Motor neuron (in vitro differentiated cells): ENCODE measurements at regions of chr17 and their contacts with region 1.

Region 1: DNA sequence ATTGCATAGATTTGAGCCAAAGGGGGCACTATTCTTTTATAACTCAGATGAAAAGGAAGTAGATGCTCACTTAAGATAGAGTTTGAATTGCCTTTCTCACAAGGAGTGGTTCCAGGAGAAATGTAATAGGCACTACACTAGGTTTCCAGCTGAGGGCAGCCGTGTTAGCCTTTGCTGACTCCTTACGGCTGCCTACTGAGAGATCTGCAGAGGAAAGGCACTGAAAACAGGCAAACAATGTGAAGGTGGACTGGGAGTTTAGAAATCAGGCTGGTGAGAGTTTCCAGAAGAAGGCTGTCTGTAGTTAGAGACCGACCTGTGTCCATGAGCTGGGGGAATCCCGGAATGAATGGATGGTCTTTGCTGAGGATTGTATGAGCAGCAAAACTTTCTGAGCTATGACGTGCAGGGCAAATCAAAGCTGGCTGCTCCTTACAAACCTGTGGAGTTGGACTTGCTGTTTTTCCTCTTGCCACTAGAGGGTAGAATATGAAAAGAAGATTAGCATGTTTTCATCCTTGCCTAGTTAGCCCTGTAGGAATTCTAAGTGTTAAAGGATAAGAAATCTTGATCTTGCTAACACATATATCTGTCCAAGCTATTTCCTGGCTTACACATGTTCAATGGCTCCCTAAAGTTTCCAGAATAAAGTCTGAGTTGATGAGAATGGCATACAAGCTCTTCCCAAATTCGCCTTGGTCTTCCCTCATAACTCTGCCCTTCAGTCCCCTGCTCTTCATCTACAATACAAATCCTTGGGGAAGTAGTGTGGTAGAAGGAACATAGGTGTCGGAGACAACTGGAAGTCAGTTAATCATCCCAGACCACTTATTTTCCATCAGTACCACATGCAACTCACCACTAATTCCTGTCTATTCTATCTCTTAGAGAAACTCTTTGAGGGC is 20.1 kb upstream of the TAOK1 start:
- ATAC-seq: peak; percentile 81 to 97 (median 89)
- H3K4me3 ChIP-seq: peak overlapping the region in 1 of 5 donors; percentile 2
- H3K27ac ChIP-seq: no peak overlapping the region
- H3K4me1 ChIP-seq: peaks cover 12 to 20% of the 10 kb centered on the region in 2 donors

Region 2: GRCh38 chr17:29549177-29549923 is 179.3 kb after region 1 on chr17:
- in situ Hi-C with region 1: loop called in 5 of 9 experiments (anchors 25 kb)
- ATAC-seq: peak in 4 of 8 experiments; percentile 48 to 83 (median 62)
- H3K4me3 ChIP-seq: no peak overlapping the region
- H3K27ac ChIP-seq: no peak overlapping the region
- H3K4me1 ChIP-seq: peaks cover 0 to 14% of the 10 kb centered on the region in 2 donors

Region 3: GRCh38 chr17:29789196-29790170 is 419.4 kb after region 1 on chr17:
- in situ Hi-C with region 1: no loop called
- ATAC-seq: peak in 3 of 8 experiments; percentile 97 to 99 (median 97)
- H3K4me3 ChIP-seq: no peak overlapping the region
- H3K27ac ChIP-seq: no peak overlapping the region
- H3K4me1 ChIP-seq: no peaks in the 10 kb centered on the region

Region 4: DNA sequence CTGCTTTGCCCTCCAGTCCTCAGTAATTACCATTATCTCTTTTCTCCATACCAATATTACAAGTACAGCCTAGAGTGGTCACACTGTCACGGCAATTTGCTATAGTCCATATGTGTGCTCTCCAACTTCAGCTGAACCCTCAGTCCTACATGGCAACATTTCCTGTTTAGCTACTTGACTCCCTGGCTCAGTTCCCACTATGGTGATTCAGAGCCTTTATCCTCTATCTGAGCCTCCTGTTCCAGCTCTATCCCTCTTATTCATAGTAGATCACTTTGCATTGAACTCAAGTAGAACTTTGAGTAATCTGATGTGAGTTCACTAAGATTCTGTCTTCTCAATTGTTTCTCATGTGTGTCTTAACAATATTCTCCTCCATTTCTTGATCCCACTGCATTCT is 1063.4 kb after region 1 on chr17:
- in situ Hi-C with region 1: no loop called
- ATAC-seq: peak in 2 of 8 experiments; percentile 99
- H3K4me3 ChIP-seq: no peak overlapping the region
- H3K27ac ChIP-seq: no peak overlapping the region
- H3K4me1 ChIP-seq: no peaks in the 10 kb centered on the region